Ovary (tissue), 10 donors: ENCODE measurements at regions of chr2 and their contacts with region 1.

Region 1: DNA sequence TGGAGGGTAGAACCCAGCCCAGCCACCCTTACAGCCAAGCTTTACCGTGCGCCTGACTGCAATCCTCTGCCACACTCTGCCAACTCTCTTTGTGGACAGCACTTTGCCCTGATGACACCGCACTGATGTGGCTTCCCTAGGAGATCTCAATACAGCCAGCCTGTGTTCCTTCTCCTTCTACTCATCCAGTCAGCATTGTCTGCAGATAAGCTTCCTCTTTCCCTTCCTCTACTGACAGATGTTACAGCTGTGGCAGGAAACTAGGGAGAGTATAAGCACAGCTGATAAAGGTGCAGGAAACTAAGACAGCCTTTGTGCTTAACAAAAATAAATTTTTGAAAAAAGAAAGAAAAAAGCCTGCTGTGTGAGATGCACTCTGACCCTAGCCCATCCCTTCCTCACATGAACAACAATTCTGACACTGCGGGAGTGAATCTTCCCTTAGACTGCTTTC is 25.0 kb downstream of the CEP68 start:
- DNase-seq: no peak
- H3K4me3 ChIP-seq: no peak overlapping the region
- H3K27ac ChIP-seq: peak overlapping the region in 1 of 2 donors; percentile 43
- H3K4me1 ChIP-seq: peaks cover 15% of the 10 kb centered on the region
- H3K27me3 ChIP-seq: no peaks in the 10 kb centered on the region
- CTCF ChIP-seq: no peak
- EP300 ChIP-seq: no peak
- POLR2A ChIP-seq: no peak

Region 2: GRCh38 chr2:64767670-64768468 is 313.4 kb before region 1 on chr2:
- intact Hi-C with region 1: no loop called
- DNase-seq: peak; percentile 89 to 93 (median 91)
- H3K4me3 ChIP-seq: peak overlapping the region; percentile 66
- H3K27ac ChIP-seq: peak overlapping the region; percentile 89 to 95
- H3K4me1 ChIP-seq: peaks cover 2% of the 10 kb centered on the region
- H3K27me3 ChIP-seq: no peaks in the 10 kb centered on the region
- CTCF ChIP-seq: no peak
- EP300 ChIP-seq: no peak
- POLR2A ChIP-seq: peak; percentile 88

Region 3: GRCh38 chr2:64797881-64798575 is 283.2 kb before region 1 on chr2:
- intact Hi-C with region 1: no loop called
- DNase-seq: no peak
- H3K4me3 ChIP-seq: no peak overlapping the region
- H3K27ac ChIP-seq: no peak overlapping the region
- H3K4me1 ChIP-seq: no peaks in the 10 kb centered on the region
- H3K27me3 ChIP-seq: no peaks in the 10 kb centered on the region
- CTCF ChIP-seq: no peak
- EP300 ChIP-seq: no peak
- POLR2A ChIP-seq: no peak

Region 4: GRCh38 chr2:65116645-65117044 is 35.4 kb after region 1 on chr2:
- intact Hi-C with region 1: loop called in 2 of 4 experiments (anchors 5 to 10 kb)
- DNase-seq: no peak
- H3K4me3 ChIP-seq: no peak overlapping the region
- H3K27ac ChIP-seq: no peak overlapping the region
- H3K4me1 ChIP-seq: peaks cover 13% of the 10 kb centered on the region
- H3K27me3 ChIP-seq: no peaks in the 10 kb centered on the region
- CTCF ChIP-seq: no peak
- EP300 ChIP-seq: no peak
- POLR2A ChIP-seq: no peak